ENCODE measurements at regions of chr1 and their contacts with region 1.

Region 1: GRCh38 chr1:156245451-156246232 is 2.2 kb downstream of the PAQR6 start:
- DNase-seq: peak in 1 of 2 experiments; percentile 54
- H3K4me3 ChIP-seq: peak overlapping the region in 3 of 4 experiments; percentile 7 to 40 (median 10); a peak in 5 of 8 replicates
- H3K27ac ChIP-seq: no peak overlapping the region
- H3K4me1 ChIP-seq: peaks cover 0 to 16% (median 9%) of the 10 kb centered on the region in 4 experiments
- H3K27me3 ChIP-seq: no peaks in the 10 kb centered on the region
- CTCF ChIP-seq: no peak
- EP300 ChIP-seq: no peak
- POLR2A ChIP-seq: no peak
- RAD21 ChIP-seq: no peak

Region 2: DNA sequence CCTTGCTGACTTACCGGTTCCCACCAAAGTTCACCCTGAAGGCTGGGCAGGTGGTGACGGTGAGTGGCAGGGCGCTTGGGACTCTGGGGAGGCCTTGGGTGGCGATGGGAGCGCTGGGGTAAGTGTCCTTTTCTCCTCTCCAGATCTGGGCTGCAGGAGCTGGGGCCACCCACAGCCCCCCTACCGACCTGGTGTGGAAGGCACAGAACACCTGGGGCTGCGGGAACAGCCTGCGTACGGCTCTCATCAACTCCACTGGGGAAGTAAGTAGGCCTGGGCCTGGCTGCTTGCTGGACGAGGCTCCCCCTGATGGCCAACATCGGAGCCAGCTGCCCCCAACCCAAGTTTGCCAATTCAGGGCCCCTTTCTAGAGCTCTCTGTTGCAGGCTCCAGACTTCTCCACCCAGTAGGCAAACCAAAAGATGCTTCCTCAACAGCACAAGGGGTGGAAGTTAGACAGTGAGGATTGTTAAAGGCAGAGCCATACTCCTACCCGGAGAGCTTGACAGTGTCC is 108.6 kb before region 1 on chr1:
- CTCF ChIA-PET with region 1: interaction called, 1,265 read pairs
- POLR2A ChIA-PET with region 1: interaction called, 27 read pairs
- DNase-seq: peak in 1 of 2 experiments; percentile 67
- H3K4me3 ChIP-seq: no peak overlapping the region
- H3K27ac ChIP-seq: no peak overlapping the region
- H3K4me1 ChIP-seq: peaks cover 0 to 6% (median 4%) of the 10 kb centered on the region in 4 experiments; a peak in 4 of 7 replicates
- H3K27me3 ChIP-seq: no peaks in the 10 kb centered on the region
- CTCF ChIP-seq: peak; percentile 59 to 71 (median 65)
- EP300 ChIP-seq: no peak
- POLR2A ChIP-seq: no peak
- RAD21 ChIP-seq: peak; percentile 32 to 51; a peak in 3 of 4 replicates

Region 3: GRCh38 chr1:156146020-156146768 is 99.4 kb before region 1 on chr1:
- CTCF ChIA-PET with region 1: interaction called, 1,265 read pairs
- POLR2A ChIA-PET with region 1: interaction called, 27 read pairs
- DNase-seq: no peak
- H3K4me3 ChIP-seq: peak overlapping the region in 1 of 4 experiments; percentile 35; a peak in 3 of 8 replicates
- H3K27ac ChIP-seq: peak overlapping the region; percentile 17; the same call in 1 of the 2 replicates
- H3K4me1 ChIP-seq: peaks cover 20 to 39% (median 29%) of the 10 kb centered on the region in 4 experiments
- H3K27me3 ChIP-seq: no peaks in the 10 kb centered on the region
- CTCF ChIP-seq: peak in 2 of 3 experiments; percentile 60 to 62; a peak in 3 of 4 replicates
- EP300 ChIP-seq: no peak
- POLR2A ChIP-seq: no peak
- RAD21 ChIP-seq: peak; percentile 74 to 79

Region 4: DNA sequence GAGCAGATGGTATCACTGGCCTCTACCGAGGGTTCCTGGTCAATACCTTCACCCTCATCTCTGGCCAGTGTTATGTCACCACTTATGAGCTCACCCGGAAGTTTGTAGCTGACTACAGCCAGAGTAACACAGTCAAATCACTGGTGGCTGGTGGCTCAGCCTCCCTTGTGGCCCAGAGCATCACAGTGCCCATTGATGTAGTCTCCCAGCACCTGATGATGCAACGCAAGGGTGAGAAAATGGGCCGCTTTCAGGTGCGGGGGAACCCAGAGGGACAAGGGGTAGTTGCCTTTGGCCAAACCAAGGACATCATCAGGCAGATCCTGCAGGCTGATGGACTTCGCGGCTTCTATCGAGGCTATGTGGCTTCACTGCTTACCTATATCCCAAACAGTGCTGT is 45.6 kb before region 1 on chr1:
- CTCF ChIA-PET with region 1: no interaction called
- POLR2A ChIA-PET with region 1: no interaction called
- DNase-seq: no peak
- H3K4me3 ChIP-seq: no peak overlapping the region
- H3K27ac ChIP-seq: no peak overlapping the region
- H3K4me1 ChIP-seq: peaks cover 0 to 11% (median 3%) of the 10 kb centered on the region in 4 experiments; a peak in 4 of 7 replicates
- H3K27me3 ChIP-seq: no peaks in the 10 kb centered on the region
- CTCF ChIP-seq: no peak
- EP300 ChIP-seq: no peak
- POLR2A ChIP-seq: no peak
- RAD21 ChIP-seq: no peak

Region 5: DNA sequence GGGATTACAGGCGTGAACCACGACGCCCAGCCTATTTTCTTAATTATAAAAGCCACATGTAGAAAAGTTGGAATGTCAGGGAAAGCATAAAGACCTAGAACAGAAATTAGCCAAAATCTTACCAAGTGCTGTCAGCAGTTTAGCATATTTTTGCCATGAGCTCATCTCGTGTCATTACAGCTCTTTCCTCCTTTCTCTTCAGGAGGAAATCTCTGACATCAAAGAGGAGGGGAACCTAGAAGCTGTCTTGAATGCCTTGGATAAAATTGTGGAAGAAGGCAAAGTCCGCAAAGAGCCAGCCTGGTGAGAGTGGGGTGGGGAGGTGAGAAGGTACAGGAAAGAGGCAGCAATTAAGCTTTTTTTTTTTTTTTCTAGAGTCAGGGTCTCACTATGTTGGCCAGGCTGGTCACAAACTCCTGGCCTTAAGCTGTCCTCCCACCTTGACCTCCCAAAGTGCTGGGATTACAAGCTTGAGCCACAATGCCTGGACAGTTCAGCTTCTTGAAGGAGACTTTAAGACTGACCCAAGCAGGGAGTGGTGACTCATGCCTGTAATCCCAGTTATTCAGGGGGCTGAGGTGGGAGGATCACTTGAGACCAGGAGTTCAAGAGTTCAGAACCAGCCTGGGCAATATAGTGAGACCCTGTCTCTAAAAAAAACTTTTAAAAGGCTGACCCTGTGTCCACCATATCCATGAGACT is 12.1 kb before region 1 on chr1:
- CTCF ChIA-PET with region 1: interaction called, 15 read pairs
- POLR2A ChIA-PET with region 1: interaction called, 82 read pairs
- DNase-seq: no peak
- H3K4me3 ChIP-seq: no peak overlapping the region
- H3K27ac ChIP-seq: no peak overlapping the region
- H3K4me1 ChIP-seq: no peaks in the 10 kb centered on the region
- H3K27me3 ChIP-seq: no peaks in the 10 kb centered on the region
- CTCF ChIP-seq: no peak
- EP300 ChIP-seq: no peak
- POLR2A ChIP-seq: no peak
- RAD21 ChIP-seq: no peak

Region 6: DNA sequence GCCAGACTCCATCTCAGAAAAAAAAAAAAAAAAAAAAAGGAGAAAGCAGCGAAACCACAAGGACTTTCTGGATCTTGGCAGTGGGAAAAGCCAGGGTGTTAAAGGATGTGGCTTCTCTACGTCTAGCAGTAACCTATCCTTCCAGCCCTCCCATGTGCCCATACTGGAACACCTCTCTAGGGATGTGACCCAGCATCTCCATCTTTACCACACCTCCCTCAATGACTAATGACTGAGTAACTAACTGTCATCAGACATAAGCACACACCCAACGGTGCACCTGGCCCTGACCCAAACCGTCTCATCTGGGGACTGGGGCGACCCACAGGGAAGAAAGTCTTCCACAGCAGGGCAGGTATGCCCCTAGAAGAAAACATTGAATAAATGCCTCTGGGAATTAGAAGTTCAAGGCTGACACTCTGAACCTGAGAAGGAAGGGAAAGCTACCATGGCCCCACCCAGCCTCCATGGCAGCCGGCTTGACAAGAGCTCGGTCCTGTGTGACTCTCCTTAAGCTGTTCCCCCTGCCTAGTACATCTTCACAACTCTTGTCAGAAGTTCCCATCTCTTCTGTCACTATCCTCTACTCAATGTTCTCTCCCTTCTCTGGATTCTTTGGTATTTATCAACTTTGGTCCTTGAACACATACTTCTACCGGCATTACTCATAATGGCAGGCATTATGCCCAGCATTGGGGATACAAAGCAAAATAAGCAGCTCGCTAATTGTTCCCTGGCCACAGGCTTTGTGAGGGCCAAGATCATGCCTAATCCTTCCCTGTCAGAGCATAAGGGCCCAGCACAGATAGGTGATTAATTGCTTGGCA is 17.0 kb after region 1 on chr1:
- CTCF ChIA-PET with region 1: interaction called, 31 read pairs
- POLR2A ChIA-PET with region 1: interaction called, 30 read pairs
- DNase-seq: no peak
- H3K4me3 ChIP-seq: no peak overlapping the region
- H3K27ac ChIP-seq: no peak overlapping the region
- H3K4me1 ChIP-seq: no peaks in the 10 kb centered on the region
- H3K27me3 ChIP-seq: no peaks in the 10 kb centered on the region
- CTCF ChIP-seq: no peak
- EP300 ChIP-seq: no peak
- POLR2A ChIP-seq: no peak
- RAD21 ChIP-seq: no peak

Region 7: DNA sequence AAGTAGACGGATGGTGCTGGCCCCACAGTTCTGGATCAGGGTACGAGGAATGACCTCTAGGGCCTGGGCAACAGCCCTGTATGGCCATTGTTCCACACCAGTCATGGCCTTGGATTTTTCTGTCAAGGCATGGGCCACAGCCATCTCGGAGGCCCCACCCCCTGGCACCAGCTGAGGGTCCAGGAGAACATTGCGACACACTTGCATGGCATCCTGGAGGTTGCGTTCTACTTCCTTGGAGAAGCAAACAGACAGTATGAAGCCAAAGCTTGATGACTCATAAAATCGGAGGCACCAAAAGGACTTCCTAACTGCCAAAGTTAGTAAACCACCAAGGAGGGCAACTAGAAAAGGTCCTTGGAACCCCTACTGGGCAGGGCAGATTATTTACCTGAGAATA is 65.3 kb after region 1 on chr1:
- CTCF ChIA-PET with region 1: no interaction called
- POLR2A ChIA-PET with region 1: no interaction called
- DNase-seq: no peak
- H3K4me3 ChIP-seq: no peak overlapping the region
- H3K27ac ChIP-seq: no peak overlapping the region
- H3K4me1 ChIP-seq: no peaks in the 10 kb centered on the region
- H3K27me3 ChIP-seq: no peaks in the 10 kb centered on the region
- CTCF ChIP-seq: no peak
- EP300 ChIP-seq: no peak
- POLR2A ChIP-seq: 0 out of 3 replicates have a peak, but pooled peaks of 1 of the 2 experiments have one; percentile 28
- RAD21 ChIP-seq: no peak